ENCODE measurements at regions of chr11 and their contacts with region 1.

Region 1: DNA sequence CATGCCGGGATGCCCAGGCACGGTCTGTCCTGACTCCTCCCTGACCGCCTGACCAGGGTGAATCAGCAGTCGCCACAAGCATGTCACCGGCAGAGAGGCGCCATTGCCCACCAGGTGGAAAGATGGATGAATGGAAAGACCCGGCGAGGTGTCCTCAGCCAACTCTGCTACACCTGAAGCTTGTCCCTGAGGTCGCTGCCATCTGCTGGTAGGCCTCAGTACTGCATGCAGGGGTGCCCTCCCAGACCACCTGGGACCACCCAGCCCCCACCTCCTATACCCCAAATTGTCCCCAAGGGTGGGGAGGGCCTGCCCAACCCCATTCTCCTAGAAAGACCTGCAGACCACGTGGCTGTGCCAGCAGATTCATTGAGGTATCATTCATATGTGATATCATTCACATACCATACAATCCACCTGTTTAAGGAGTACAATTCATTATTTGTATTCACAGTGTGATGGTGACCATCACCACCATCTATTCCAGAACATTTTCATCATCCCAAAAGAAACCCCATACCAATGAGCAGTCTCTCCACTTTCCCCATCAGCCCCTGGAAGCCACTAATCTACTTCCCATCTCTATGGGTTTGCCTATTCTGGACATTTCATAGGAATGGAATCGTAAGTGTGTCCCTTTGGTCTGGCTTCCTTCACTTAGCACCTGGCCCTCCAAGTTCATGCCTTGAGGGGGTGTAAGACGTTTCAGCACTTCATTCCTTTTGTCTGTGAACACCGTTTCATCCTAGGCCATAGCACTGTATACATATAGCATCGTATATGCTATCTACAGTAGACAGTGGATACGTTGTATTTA is 17.5 kb downstream of the FGF3 start:
- DNase-seq: peak; percentile 34
- ATAC-seq: peak; percentile 70
- H3K4me3 ChIP-seq: no peak overlapping the region
- H3K27ac ChIP-seq: no peak overlapping the region
- H3K4me1 ChIP-seq: no peaks in the 10 kb centered on the region
- H3K27me3 ChIP-seq: no peaks in the 10 kb centered on the region; a peak in 1 of 5 replicates
- CTCF ChIP-seq: peak; percentile 76
- EP300 ChIP-seq: no peak
- POLR2A ChIP-seq: no peak
- RAD21 ChIP-seq: peak; percentile 40

Region 2: DNA sequence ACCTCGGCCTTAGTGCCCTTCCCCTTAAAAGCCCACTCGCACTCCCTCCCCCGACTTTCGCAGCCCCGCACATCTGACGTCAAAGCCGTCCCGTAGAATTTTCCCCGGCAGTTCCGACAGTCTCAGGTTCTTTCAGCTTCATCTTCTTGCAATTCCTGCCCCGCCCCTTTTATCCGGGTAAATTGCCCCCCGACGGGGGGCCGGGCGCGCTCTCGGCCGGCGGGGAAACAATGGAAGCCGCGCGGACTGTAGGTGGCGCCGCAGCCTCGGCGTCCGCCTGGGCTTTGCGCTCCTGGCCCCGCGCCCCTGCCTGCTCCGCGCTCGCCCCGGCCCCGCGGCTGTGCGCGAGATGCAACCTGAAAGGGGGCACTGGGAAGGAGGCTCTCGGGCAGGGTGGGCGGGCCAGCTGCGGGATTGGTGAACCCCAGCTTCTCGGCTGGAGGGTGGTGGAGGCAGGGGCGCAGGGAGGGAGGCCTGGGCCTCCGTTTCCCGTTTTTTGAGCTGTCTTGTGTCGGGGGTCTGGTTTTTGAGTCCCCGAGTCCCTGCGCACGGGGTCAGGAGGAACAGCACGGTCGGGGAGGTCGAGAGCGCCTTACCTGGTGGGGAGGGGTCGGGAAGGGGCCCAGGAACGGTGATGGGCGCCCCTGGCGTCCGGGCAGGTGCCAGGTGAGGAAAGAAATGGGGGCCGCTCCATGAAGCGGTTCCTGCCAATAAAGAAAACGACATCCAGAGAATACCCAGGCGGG is 97.0 kb before region 1 on chr11:
- CTCF ChIA-PET with region 1: no interaction called
- POLR2A ChIA-PET with region 1: no interaction called
- in situ Hi-C with region 1: no loop called
- intact Hi-C with region 1: loop called (anchors 5 kb)
- DNase-seq: no peak
- ATAC-seq: no peak
- H3K4me3 ChIP-seq: no peak overlapping the region
- H3K27ac ChIP-seq: no peak overlapping the region
- H3K4me1 ChIP-seq: peaks cover 84% of the 10 kb centered on the region
- H3K27me3 ChIP-seq: no peaks in the 10 kb centered on the region
- CTCF ChIP-seq: no peak
- EP300 ChIP-seq: no peak
- POLR2A ChIP-seq: no peak
- RAD21 ChIP-seq: no peak

Region 3: GRCh38 chr11:69718147-69718546 is 83.6 kb before region 1 on chr11:
- CTCF ChIA-PET with region 1: interaction called, 9 read pairs
- POLR2A ChIA-PET with region 1: no interaction called
- in situ Hi-C with region 1: loop called (anchors 5 kb)
- intact Hi-C with region 1: loop called (anchors 5 kb)
- DNase-seq: peak; percentile 30
- ATAC-seq: peak; percentile 87
- H3K4me3 ChIP-seq: no peak overlapping the region
- H3K27ac ChIP-seq: no peak overlapping the region
- H3K4me1 ChIP-seq: no peaks in the 10 kb centered on the region
- H3K27me3 ChIP-seq: peaks cover 2 to 53% of the 10 kb centered on the region in 2 experiments; a peak in 4 of 5 replicates
- CTCF ChIP-seq: peak; percentile 69
- EP300 ChIP-seq: no peak
- POLR2A ChIP-seq: no peak
- RAD21 ChIP-seq: peak; percentile 74

Region 4: GRCh38 chr11:69854719-69855118 is 53.0 kb after region 1 on chr11:
- CTCF ChIA-PET with region 1: no interaction called
- POLR2A ChIA-PET with region 1: no interaction called
- in situ Hi-C with region 1: no loop called
- intact Hi-C with region 1: no loop called
- DNase-seq: no peak
- ATAC-seq: no peak
- H3K4me3 ChIP-seq: no peak overlapping the region
- H3K27ac ChIP-seq: no peak overlapping the region
- H3K4me1 ChIP-seq: no peaks in the 10 kb centered on the region
- H3K27me3 ChIP-seq: no peaks in the 10 kb centered on the region; a peak in 1 of 5 replicates
- CTCF ChIP-seq: no peak
- EP300 ChIP-seq: no peak
- POLR2A ChIP-seq: no peak
- RAD21 ChIP-seq: no peak

Region 5: GRCh38 chr11:69867738-69868493 is 66.2 kb after region 1 on chr11:
- CTCF ChIA-PET with region 1: no interaction called
- POLR2A ChIA-PET with region 1: no interaction called
- in situ Hi-C with region 1: no loop called
- intact Hi-C with region 1: no loop called
- DNase-seq: no peak
- ATAC-seq: no peak
- H3K4me3 ChIP-seq: no peak overlapping the region
- H3K27ac ChIP-seq: no peak overlapping the region
- H3K4me1 ChIP-seq: no peaks in the 10 kb centered on the region
- H3K27me3 ChIP-seq: peaks cover 4 to 47% of the 10 kb centered on the region in 2 experiments; a peak in 3 of 5 replicates
- CTCF ChIP-seq: no peak
- EP300 ChIP-seq: no peak
- POLR2A ChIP-seq: no peak
- RAD21 ChIP-seq: no peak

Region 6: GRCh38 chr11:70016666-70017367 is 215.1 kb after region 1 on chr11:
- CTCF ChIA-PET with region 1: no interaction called
- POLR2A ChIA-PET with region 1: no interaction called
- in situ Hi-C with region 1: no loop called
- intact Hi-C with region 1: no loop called
- DNase-seq: no peak
- ATAC-seq: no peak
- H3K4me3 ChIP-seq: no peak overlapping the region
- H3K27ac ChIP-seq: no peak overlapping the region
- H3K4me1 ChIP-seq: no peaks in the 10 kb centered on the region
- H3K27me3 ChIP-seq: peaks cover 4 to 47% of the 10 kb centered on the region in 2 experiments; a peak in 4 of 5 replicates
- CTCF ChIP-seq: no peak
- EP300 ChIP-seq: no peak
- POLR2A ChIP-seq: no peak
- RAD21 ChIP-seq: no peak

Region 7: DNA sequence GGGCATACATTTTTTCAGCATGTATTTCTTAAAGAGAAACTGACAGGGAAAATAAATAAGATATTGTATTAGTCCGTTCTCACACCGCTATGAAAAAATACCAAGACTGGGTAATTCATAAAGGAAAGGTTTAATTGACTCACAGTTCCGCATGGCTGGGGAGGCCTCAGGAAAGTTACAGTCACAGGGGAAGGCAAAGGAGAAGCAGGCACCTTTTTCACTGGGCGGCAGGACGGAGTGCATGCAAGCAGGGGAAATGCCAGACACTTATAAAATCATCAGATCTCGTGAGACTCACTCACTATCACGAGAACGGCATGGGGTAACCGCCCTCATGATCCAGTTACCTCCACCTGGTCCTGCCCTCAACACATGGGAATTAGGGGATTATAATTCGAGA is 513.0 kb after region 1 on chr11:
- CTCF ChIA-PET with region 1: no interaction called
- POLR2A ChIA-PET with region 1: no interaction called
- in situ Hi-C with region 1: no loop called
- intact Hi-C with region 1: no loop called
- DNase-seq: no peak
- ATAC-seq: no peak
- H3K4me3 ChIP-seq: no peak overlapping the region
- H3K27ac ChIP-seq: no peak overlapping the region
- H3K4me1 ChIP-seq: peaks cover 18% of the 10 kb centered on the region
- H3K27me3 ChIP-seq: no peaks in the 10 kb centered on the region
- CTCF ChIP-seq: no peak
- EP300 ChIP-seq: no peak
- POLR2A ChIP-seq: no peak
- RAD21 ChIP-seq: no peak